ENCODE measurements at regions of chr14 and their contacts with region 1.

Region 1: GRCh38 chr14:106518054-106518943 is 991.9 kb downstream of the TMEM121 start:
- DNase-seq: peak; percentile 86 to 89
- ATAC-seq: peak; percentile 74 to 87 (median 77)
- H3K4me3 ChIP-seq: no peak overlapping the region
- H3K4me3 Mint-ChIP-seq: no peak overlapping the region
- H3K27ac ChIP-seq: no peak overlapping the region
- H3K27ac Mint-ChIP-seq: no peak overlapping the region
- H3K4me1 ChIP-seq: peaks cover 13% of the 10 kb centered on the region
- H3K4me1 Mint-ChIP-seq: peaks cover 21 to 27% of the 10 kb centered on the region in 2 donors
- H3K27me3 ChIP-seq: no peaks in the 10 kb centered on the region
- H3K27me3 Mint-ChIP-seq: peaks cover 2 to 21% of the 10 kb centered on the region in 2 donors
- CTCF ChIP-seq: peak; percentile 95

Region 2: DNA sequence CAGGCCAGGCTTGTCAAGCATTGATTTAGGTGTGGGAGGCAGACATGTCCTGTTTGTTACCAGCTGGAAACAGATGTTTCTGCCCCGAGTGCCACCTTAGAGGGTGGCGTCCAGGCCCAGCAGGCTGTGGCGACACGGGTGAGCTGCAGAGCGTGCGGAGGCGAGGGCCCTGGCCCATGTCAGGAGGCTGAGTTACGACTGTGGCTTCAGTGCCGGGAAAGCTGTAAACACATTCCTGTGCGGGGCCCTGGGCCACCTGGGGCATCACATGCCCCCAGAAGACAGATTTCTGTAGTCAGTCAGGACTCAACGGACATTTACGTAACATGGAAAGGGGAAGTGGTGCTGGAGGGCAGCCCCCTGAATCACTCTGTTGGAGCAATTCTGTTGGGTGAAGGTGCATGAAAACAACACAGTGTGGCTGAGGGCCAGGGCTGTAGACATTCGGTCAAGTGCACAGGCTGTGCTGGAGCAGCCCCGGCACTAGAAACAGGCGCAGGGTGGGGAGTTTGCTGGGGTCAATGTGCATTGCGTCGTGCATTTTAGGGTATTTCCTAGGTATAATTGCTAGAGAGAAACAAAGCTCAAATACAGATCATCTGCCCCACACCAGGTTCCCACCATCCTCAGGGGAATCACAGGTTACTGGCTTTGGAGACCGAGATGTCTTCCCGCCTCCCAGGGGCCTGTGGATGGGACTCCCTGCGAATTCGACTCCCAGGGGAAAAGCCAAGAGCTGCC is 700.2 kb before region 1 on chr14:
- intact Hi-C with region 1: no loop called
- DNase-seq: no peak
- ATAC-seq: peak in 2 of 3 donors; percentile 25 to 39
- H3K4me3 ChIP-seq: no peak overlapping the region
- H3K4me3 Mint-ChIP-seq: no peak overlapping the region
- H3K27ac ChIP-seq: peak overlapping the region; percentile 93
- H3K27ac Mint-ChIP-seq: no peak overlapping the region
- H3K4me1 ChIP-seq: peaks cover 20% of the 10 kb centered on the region
- H3K4me1 Mint-ChIP-seq: no peaks in the 10 kb centered on the region
- H3K27me3 ChIP-seq: no peaks in the 10 kb centered on the region
- H3K27me3 Mint-ChIP-seq: peaks cover 21 to 33% of the 10 kb centered on the region in 2 donors
- CTCF ChIP-seq: no peak

Region 3: GRCh38 chr14:106436310-106436905 is 81.9 kb before region 1 on chr14:
- intact Hi-C with region 1: loop called (anchors 1 kb)
- DNase-seq: peak; percentile 41 to 54
- ATAC-seq: peak in 1 of 3 donors; percentile 49
- H3K4me3 ChIP-seq: no peak overlapping the region
- H3K4me3 Mint-ChIP-seq: no peak overlapping the region
- H3K27ac ChIP-seq: no peak overlapping the region
- H3K27ac Mint-ChIP-seq: no peak overlapping the region
- H3K4me1 ChIP-seq: no peaks in the 10 kb centered on the region
- H3K4me1 Mint-ChIP-seq: peaks cover 0 to 4% of the 10 kb centered on the region in 2 donors
- H3K27me3 ChIP-seq: no peaks in the 10 kb centered on the region
- H3K27me3 Mint-ChIP-seq: peaks cover 7 to 62% of the 10 kb centered on the region in 2 donors
- CTCF ChIP-seq: peak; percentile 70

Region 4: GRCh38 chr14:106459971-106460730 is 58.1 kb before region 1 on chr14:
- intact Hi-C with region 1: loop called (anchors 1 kb)
- DNase-seq: peak; percentile 28 to 77
- ATAC-seq: peak; percentile 59 to 67 (median 63)
- H3K4me3 ChIP-seq: no peak overlapping the region
- H3K4me3 Mint-ChIP-seq: no peak overlapping the region
- H3K27ac ChIP-seq: no peak overlapping the region
- H3K27ac Mint-ChIP-seq: no peak overlapping the region
- H3K4me1 ChIP-seq: no peaks in the 10 kb centered on the region
- H3K4me1 Mint-ChIP-seq: peaks cover 3 to 9% of the 10 kb centered on the region in 2 donors
- H3K27me3 ChIP-seq: no peaks in the 10 kb centered on the region
- H3K27me3 Mint-ChIP-seq: peaks cover 2 to 36% of the 10 kb centered on the region in 2 donors
- CTCF ChIP-seq: peak; percentile 60

Measured in natural killer cell (primary cell).